ENCODE measurements at regions of chr19 and their contacts with region 1.

Region 1: DNA sequence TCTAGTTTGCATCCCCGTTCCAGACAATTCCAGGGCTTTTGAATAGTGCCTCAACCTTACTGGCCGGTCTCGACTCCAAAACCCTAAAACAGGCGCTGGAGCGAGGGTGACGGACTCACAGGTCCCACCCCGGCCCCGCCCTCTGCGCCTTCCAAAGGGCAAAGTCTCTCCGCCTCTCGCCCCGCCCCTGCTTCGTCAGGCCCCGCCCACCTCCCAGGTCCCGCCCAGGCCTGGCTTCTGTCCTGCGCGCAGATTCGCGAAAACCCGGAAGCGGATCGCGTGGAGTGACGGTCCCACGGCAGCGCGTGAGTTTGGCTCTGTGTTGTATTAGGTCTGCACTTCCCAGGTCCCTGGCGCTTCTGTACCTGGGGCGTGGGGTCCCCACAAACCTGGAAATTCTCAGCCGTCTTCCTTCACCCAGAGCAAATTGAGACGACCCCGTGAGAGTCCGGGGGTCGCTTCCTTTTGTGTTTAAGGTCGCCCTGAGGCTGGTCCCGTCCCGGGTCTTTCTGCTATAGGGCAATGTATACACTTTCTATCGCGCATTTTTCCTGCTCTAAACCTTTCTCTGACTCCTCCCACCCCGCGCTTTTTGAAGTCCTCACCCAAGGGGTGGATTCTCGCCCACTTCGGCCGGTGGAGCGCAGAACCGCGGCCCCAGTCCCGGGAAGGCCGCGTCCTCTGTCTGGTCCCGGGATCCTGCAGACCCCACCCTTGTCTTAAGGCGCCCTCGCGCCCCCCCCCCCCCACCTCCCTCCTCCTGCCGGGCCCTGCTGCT is at the start of gene ZNF813:
- DNase-seq: peak; percentile 98
- H3K4me3 Mint-ChIP-seq: peak within 1 kb of the TSS; percentile 88
- H3K27ac Mint-ChIP-seq: peak within 1 kb of the TSS; percentile 83
- H3K4me1 Mint-ChIP-seq: peaks cover 20% of the 10 kb centered on the region
- H3K27me3 Mint-ChIP-seq: peaks cover 21% of the 10 kb centered on the region
- total RNA-seq, gene ZNF813: 4.5 to 5.6 TPM

Region 2: GRCh38 chr19:53103198-53103944 is 364.3 kb before region 1 on chr19 and contains the start of gene ZNF160:
- CTCF ChIA-PET with region 1: no interaction called
- intact Hi-C with region 1: loop called (anchors 1 kb)
- DNase-seq: peak; percentile 99
- H3K4me3 Mint-ChIP-seq: peak within 1 kb of the TSS; percentile 82
- H3K27ac Mint-ChIP-seq: peak within 1 kb of the TSS; percentile 84
- H3K4me1 Mint-ChIP-seq: peaks cover 22% of the 10 kb centered on the region
- H3K27me3 Mint-ChIP-seq: no peaks in the 10 kb centered on the region
- total RNA-seq, gene ZNF160: 23.5 to 25.2 TPM

Region 3: DNA sequence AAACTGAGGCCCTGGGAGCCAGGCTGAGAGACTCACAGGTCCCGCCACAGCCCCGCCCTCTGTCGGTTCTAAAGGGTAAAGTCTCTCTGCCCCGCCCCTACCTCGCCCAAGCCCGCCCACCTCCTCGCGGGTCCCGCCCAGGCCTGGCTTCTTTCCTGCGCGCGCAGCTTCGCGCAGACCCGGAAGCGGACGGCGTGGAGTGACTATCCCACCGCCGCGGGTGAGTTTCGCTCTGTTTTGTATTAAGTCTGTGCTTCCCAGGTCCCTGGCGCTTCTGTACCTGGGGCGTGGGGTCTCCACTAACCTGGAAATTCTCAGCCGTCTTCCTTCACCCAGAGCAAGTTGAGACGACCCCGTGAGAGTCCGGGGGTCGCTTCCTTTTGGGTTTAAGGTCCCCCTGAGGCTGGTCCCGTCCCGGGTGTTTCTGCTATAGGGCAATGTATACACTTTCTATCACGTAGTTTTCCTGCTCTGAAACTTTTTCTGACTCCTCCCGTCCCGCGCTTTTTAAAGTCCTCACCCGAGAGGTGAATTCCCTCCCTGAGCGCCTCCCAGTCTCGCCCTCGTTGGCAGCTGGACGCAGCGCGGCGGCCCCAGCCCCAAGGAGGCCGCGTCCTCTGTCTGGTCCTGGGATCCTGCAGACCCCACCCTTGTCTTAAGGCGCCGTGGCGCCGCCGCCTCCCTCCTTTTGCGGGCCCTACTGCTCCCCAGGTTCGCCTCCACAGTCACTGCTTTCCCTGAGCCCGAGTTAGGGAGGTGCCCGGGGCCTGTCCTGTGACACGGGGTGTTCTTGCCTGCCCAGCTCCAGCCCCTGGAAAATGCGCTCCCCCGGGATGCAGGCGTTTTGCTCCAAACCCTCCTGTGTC is 72.5 kb before region 1 on chr19 and contains the start of gene ZNF765:
- CTCF ChIA-PET with region 1: no interaction called
- intact Hi-C with region 1: loop called (anchors 5 kb)
- DNase-seq: peak; percentile 97
- H3K4me3 Mint-ChIP-seq: peak within 1 kb of the TSS; percentile 88
- H3K27ac Mint-ChIP-seq: peak within 1 kb of the TSS; percentile 90
- H3K4me1 Mint-ChIP-seq: peaks cover 27% of the 10 kb centered on the region
- H3K27me3 Mint-ChIP-seq: no peaks in the 10 kb centered on the region
- total RNA-seq, gene ZNF765: 7.9 to 8.0 TPM

Region 4: GRCh38 chr19:53431399-53432087 is 36.1 kb before region 1 on chr19 and contains the start of gene ZNF761:
- CTCF ChIA-PET with region 1: no interaction called
- intact Hi-C with region 1: loop called (anchors 1 kb)
- DNase-seq: peak; percentile 97
- H3K4me3 Mint-ChIP-seq: peak within 1 kb of the TSS; percentile 83
- H3K27ac Mint-ChIP-seq: peak within 1 kb of the TSS; percentile 88
- H3K4me1 Mint-ChIP-seq: peaks cover 21% of the 10 kb centered on the region
- H3K27me3 Mint-ChIP-seq: no peaks in the 10 kb centered on the region
- total RNA-seq, gene ZNF761: 8.7 to 10.0 TPM

Region 5: GRCh38 chr19:53492153-53492552 is 24.5 kb after region 1 on chr19:
- CTCF ChIA-PET with region 1: no interaction called
- intact Hi-C with region 1: no loop called
- DNase-seq: no peak
- H3K4me3 Mint-ChIP-seq: no peak overlapping the region
- H3K27ac Mint-ChIP-seq: no peak overlapping the region
- H3K4me1 Mint-ChIP-seq: no peaks in the 10 kb centered on the region
- H3K27me3 Mint-ChIP-seq: no peaks in the 10 kb centered on the region

Region 6: GRCh38 chr19:53537480-53538383 is 70.1 kb after region 1 on chr19 and contains the start of gene ZNF331:
- CTCF ChIA-PET with region 1: no interaction called
- intact Hi-C with region 1: loop called (anchors 1 kb)
- DNase-seq: peak; percentile 88
- H3K4me3 Mint-ChIP-seq: peak within 1 kb of the TSS; percentile 94
- H3K27ac Mint-ChIP-seq: peak within 1 kb of the TSS; percentile 92
- H3K4me1 Mint-ChIP-seq: peaks cover 22% of the 10 kb centered on the region
- H3K27me3 Mint-ChIP-seq: no peaks in the 10 kb centered on the region
- total RNA-seq, gene ZNF331: 35.5 to 36.9 TPM